Mucosa of descending colon (tissue), 3 donors: ENCODE measurements at regions of chr4 and their contacts with region 1.

Region 1: GRCh38 chr4:146456681-146457080 is 65.1 kb downstream of the SLC10A7 start:
- DNase-seq: no peak
- ATAC-seq: no peak
- H3K4me3 ChIP-seq: no peak overlapping the region
- H3K4me1 ChIP-seq: no peaks in the 10 kb centered on the region
- CTCF ChIP-seq: no peak

Region 2: DNA sequence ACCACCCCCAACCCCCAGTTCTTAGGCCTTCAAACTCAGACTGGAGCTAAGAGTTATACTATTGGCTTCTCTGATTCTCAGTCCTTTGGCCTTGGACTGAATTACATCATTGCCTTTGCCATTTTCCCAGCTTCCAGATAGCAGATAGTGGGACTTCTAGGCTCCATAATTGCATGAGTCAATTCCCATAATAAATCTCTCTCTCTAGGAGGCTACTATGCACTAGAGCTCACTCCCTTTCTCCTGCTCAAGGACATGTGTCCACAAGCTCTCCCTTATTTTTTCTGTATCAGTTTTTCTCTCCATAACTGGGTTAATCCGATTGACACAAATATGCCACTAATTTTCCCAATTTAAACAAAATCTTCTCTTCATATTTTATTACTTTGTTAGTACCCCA is 138.9 kb before region 1 on chr4:
- intact Hi-C with region 1: no loop called
- DNase-seq: no peak
- ATAC-seq: no peak
- H3K4me3 ChIP-seq: no peak overlapping the region
- H3K4me1 ChIP-seq: no peaks in the 10 kb centered on the region
- CTCF ChIP-seq: no peak

Region 3: DNA sequence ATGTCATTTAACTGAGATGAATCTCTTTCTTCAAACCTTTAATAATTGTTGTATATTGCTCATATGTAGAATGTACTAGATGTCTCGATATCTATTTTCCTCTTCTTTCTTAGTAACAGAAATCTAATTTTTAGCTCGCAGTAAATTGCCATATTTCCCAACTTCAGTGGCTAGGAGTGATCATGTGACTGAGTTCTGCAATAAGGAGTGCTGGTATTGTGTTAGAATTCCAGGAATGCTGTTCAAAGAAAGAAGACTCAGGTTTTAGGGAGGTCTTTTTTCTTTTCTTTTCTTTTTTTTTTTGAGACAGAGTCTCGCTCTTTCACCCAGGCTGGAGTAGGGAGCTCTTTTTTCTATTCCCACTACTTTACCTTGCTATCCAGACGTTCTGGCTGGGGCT is 16.7 kb before region 1 on chr4:
- intact Hi-C with region 1: loop called in 1 of 2 experiments (anchors 2 kb)
- DNase-seq: no peak
- ATAC-seq: no peak
- H3K4me3 ChIP-seq: no peak overlapping the region
- H3K4me1 ChIP-seq: no peaks in the 10 kb centered on the region
- CTCF ChIP-seq: no peak